OCI-LY7 (cell line): ENCODE measurements at regions of chr7 and their contacts with region 1.

Region 1: GRCh38 chr7:50166997-50167965 is 74.2 kb upstream of the ZPBP start:
- DNase-seq: peak; percentile 84
- H3K4me3 ChIP-seq: peak overlapping the region; percentile 10
- H3K27ac ChIP-seq: peak overlapping the region; percentile 61
- H3K4me1 ChIP-seq: peaks cover 61% of the 10 kb centered on the region
- CTCF ChIP-seq: no peak

Region 2: GRCh38 chr7:50092579-50093491 is 74.4 kb before region 1 on chr7 and contains the start of gene ZPBP:
- CTCF ChIA-PET with region 1: no interaction called
- POLR2A ChIA-PET with region 1: no interaction called
- intact Hi-C with region 1: no loop called
- DNase-seq: peak; percentile 69
- H3K4me3 ChIP-seq: no peak within 1 kb of the TSS
- H3K27ac ChIP-seq: no peak within 1 kb of the TSS
- H3K4me1 ChIP-seq: peaks cover 5% of the 10 kb centered on the region
- CTCF ChIP-seq: peak; percentile 99
- total RNA-seq, gene ZPBP: not detected in 2 replicates

Region 3: GRCh38 chr7:50147951-50148808 is 19.1 kb before region 1 on chr7:
- CTCF ChIA-PET with region 1: interaction called, 5 read pairs
- POLR2A ChIA-PET with region 1: interaction called, 31 read pairs
- intact Hi-C with region 1: no loop called
- DNase-seq: peak; percentile 97
- H3K4me3 ChIP-seq: peak overlapping the region; percentile 52
- H3K27ac ChIP-seq: peak overlapping the region; percentile 99
- H3K4me1 ChIP-seq: peaks cover 99% of the 10 kb centered on the region
- CTCF ChIP-seq: no peak

Region 4: GRCh38 chr7:50156706-50157105 is 10.6 kb before region 1 on chr7:
- CTCF ChIA-PET with region 1: interaction called, 5 read pairs
- POLR2A ChIA-PET with region 1: interaction called, 31 read pairs
- intact Hi-C with region 1: no loop called
- DNase-seq: peak; percentile 25
- H3K4me3 ChIP-seq: peak overlapping the region; percentile 30
- H3K27ac ChIP-seq: peak overlapping the region; percentile 42
- H3K4me1 ChIP-seq: peaks cover 67% of the 10 kb centered on the region
- CTCF ChIP-seq: no peak

Region 5: DNA sequence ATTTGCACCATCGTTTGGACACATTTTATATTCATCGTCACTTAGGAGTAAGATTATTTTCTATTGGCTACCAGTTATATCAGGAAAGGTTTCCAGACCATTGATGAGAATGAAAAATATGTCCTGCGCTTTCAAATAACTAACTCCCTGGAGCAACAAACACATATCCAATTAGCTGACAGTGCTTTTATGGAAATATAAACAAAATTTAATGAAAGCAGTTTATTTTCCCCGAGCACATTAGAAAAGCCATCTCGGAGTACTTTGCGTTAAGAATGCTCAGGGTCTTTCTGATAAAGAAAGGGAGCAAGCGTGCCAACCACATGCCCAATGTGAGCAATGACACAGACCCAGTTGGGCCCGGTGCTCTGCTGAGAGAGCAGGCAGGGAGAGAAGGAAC is 10.9 kb after region 1 on chr7:
- CTCF ChIA-PET with region 1: no interaction called
- POLR2A ChIA-PET with region 1: interaction called, 10 read pairs
- intact Hi-C with region 1: no loop called
- DNase-seq: no peak
- H3K4me3 ChIP-seq: no peak overlapping the region
- H3K27ac ChIP-seq: no peak overlapping the region
- H3K4me1 ChIP-seq: peaks cover 8% of the 10 kb centered on the region
- CTCF ChIP-seq: no peak